ENCODE measurements at regions of chr3 and their contacts with region 1.

Region 1: DNA sequence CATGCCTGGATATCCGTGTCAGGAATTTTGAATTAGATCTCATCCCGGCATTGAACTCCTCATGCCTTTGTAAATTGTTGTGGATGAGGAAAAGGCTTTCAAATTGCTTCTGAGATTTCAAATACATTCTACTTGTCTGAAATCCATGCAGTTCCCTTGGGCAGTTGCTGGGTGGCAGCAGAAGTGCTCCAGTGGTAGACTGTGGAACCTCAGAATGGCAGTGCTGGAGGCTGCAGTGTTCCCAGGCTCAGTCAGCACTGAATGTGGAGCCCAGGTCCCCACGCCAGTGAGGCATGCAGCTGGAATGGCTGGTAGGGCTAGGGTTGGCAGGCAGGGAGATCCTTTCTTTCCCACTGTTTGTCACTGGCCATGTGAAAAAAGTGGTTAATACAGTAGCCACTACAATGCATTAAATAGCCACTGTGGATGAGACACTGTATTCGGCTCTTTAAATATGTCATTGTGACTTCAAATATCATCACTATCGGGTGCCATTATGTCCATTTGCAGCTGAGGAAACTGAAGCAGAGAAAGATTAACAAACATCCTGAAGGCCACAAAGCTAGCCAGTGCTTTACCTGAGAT is 98.6 kb downstream of the TPRG1 start:
- DNase-seq: peak; percentile 18 to 34 (median 29)
- H3K4me3 ChIP-seq: no peak overlapping the region
- H3K4me3 Mint-ChIP-seq: no peak overlapping the region
- H3K27ac ChIP-seq: no peak overlapping the region
- H3K27ac Mint-ChIP-seq: no peak overlapping the region
- H3K4me1 ChIP-seq: peaks cover 10% of the 10 kb centered on the region
- H3K4me1 Mint-ChIP-seq: peaks cover 7 to 15% (median 11%) of the 10 kb centered on the region in 4 donors
- H3K27me3 ChIP-seq: no peaks in the 10 kb centered on the region
- H3K27me3 Mint-ChIP-seq: no peaks in the 10 kb centered on the region

Region 2: GRCh38 chr3:189249987-189250386 is 20.4 kb before region 1 on chr3:
- CTCF ChIA-PET with region 1: no interaction called
- POLR2A ChIA-PET with region 1: no interaction called
- intact Hi-C with region 1: no loop called
- DNase-seq: no peak
- H3K4me3 ChIP-seq: no peak overlapping the region
- H3K4me3 Mint-ChIP-seq: no peak overlapping the region
- H3K27ac ChIP-seq: no peak overlapping the region
- H3K27ac Mint-ChIP-seq: peak overlapping the region in 1 of 7 donors; percentile 27
- H3K4me1 ChIP-seq: no peaks in the 10 kb centered on the region
- H3K4me1 Mint-ChIP-seq: no peaks in the 10 kb centered on the region
- H3K27me3 ChIP-seq: no peaks in the 10 kb centered on the region
- H3K27me3 Mint-ChIP-seq: no peaks in the 10 kb centered on the region

Region 3: GRCh38 chr3:189282741-189283140 is 12.4 kb after region 1 on chr3:
- CTCF ChIA-PET with region 1: interaction called, 11 read pairs
- POLR2A ChIA-PET with region 1: no interaction called
- intact Hi-C with region 1: no loop called
- DNase-seq: no peak
- H3K4me3 ChIP-seq: no peak overlapping the region
- H3K4me3 Mint-ChIP-seq: no peak overlapping the region
- H3K27ac ChIP-seq: no peak overlapping the region
- H3K27ac Mint-ChIP-seq: no peak overlapping the region
- H3K4me1 ChIP-seq: peaks cover 22% of the 10 kb centered on the region
- H3K4me1 Mint-ChIP-seq: peaks cover 16 to 26% (median 20%) of the 10 kb centered on the region in 4 donors
- H3K27me3 ChIP-seq: no peaks in the 10 kb centered on the region
- H3K27me3 Mint-ChIP-seq: no peaks in the 10 kb centered on the region

Region 4: GRCh38 chr3:189334064-189334920 is 64.0 kb after region 1 on chr3:
- CTCF ChIA-PET with region 1: interaction called, 15 read pairs
- POLR2A ChIA-PET with region 1: no interaction called
- intact Hi-C with region 1: no loop called
- DNase-seq: peak in 4 of 5 donors; percentile 20 to 40 (median 33)
- H3K4me3 ChIP-seq: no peak overlapping the region
- H3K4me3 Mint-ChIP-seq: peak overlapping the region in 2 of 8 donors; percentile 12 to 16
- H3K27ac ChIP-seq: no peak overlapping the region
- H3K27ac Mint-ChIP-seq: peak overlapping the region in 5 of 7 donors; percentile 5 to 85 (median 20)
- H3K4me1 ChIP-seq: peaks cover 41% of the 10 kb centered on the region
- H3K4me1 Mint-ChIP-seq: peaks cover 34 to 48% (median 41%) of the 10 kb centered on the region in 4 donors
- H3K27me3 ChIP-seq: no peaks in the 10 kb centered on the region
- H3K27me3 Mint-ChIP-seq: no peaks in the 10 kb centered on the region

Region 5: GRCh38 chr3:189394599-189395121 is 124.3 kb after region 1 on chr3:
- CTCF ChIA-PET with region 1: no interaction called
- POLR2A ChIA-PET with region 1: no interaction called
- intact Hi-C with region 1: no loop called
- DNase-seq: no peak
- H3K4me3 ChIP-seq: no peak overlapping the region
- H3K4me3 Mint-ChIP-seq: peak overlapping the region in 6 of 8 donors; percentile 2 to 55 (median 26)
- H3K27ac ChIP-seq: no peak overlapping the region
- H3K27ac Mint-ChIP-seq: peak overlapping the region in 2 of 7 donors; percentile 19 to 59
- H3K4me1 ChIP-seq: peaks cover 13% of the 10 kb centered on the region
- H3K4me1 Mint-ChIP-seq: peaks cover 13 to 20% (median 17%) of the 10 kb centered on the region in 4 donors
- H3K27me3 ChIP-seq: no peaks in the 10 kb centered on the region
- H3K27me3 Mint-ChIP-seq: peaks cover 0 to 1% of the 10 kb centered on the region in 2 donors

Region 6: DNA sequence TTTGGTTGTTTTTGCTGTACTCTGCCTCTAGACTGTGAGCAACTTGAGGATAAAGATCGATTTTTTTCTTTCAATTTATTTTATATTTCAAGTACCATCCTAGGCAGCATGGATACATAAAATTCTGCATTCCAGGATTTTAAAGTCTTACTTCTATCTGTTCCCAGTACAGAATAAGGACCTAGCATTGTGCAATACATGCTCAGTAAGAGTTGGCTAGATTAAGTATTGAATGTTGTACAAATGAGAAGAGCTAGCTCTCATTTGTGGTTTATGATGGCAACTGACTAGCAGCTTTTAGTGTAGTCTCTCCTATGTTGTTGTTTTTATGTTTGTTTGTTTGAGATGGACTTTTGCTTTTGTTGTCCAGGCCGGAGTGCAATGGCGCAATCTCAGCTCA is 583.6 kb after region 1 on chr3:
- CTCF ChIA-PET with region 1: no interaction called
- POLR2A ChIA-PET with region 1: no interaction called
- intact Hi-C with region 1: loop called (anchors 5 kb)
- DNase-seq: no peak
- H3K4me3 ChIP-seq: no peak overlapping the region
- H3K4me3 Mint-ChIP-seq: no peak overlapping the region
- H3K27ac ChIP-seq: no peak overlapping the region
- H3K27ac Mint-ChIP-seq: no peak overlapping the region
- H3K4me1 ChIP-seq: no peaks in the 10 kb centered on the region
- H3K4me1 Mint-ChIP-seq: no peaks in the 10 kb centered on the region
- H3K27me3 ChIP-seq: no peaks in the 10 kb centered on the region
- H3K27me3 Mint-ChIP-seq: peaks cover 0 to 2% of the 10 kb centered on the region in 2 donors

Region 7: GRCh38 chr3:189961525-189962161 is 691.3 kb after region 1 on chr3:
- CTCF ChIA-PET with region 1: interaction called, 23 read pairs
- POLR2A ChIA-PET with region 1: no interaction called
- intact Hi-C with region 1: no loop called
- DNase-seq: peak; percentile 40 to 53 (median 50)
- H3K4me3 ChIP-seq: no peak overlapping the region
- H3K4me3 Mint-ChIP-seq: no peak overlapping the region
- H3K27ac ChIP-seq: no peak overlapping the region
- H3K27ac Mint-ChIP-seq: no peak overlapping the region
- H3K4me1 ChIP-seq: peaks cover 6% of the 10 kb centered on the region
- H3K4me1 Mint-ChIP-seq: peaks cover 2 to 8% (median 5%) of the 10 kb centered on the region in 4 donors
- H3K27me3 ChIP-seq: no peaks in the 10 kb centered on the region
- H3K27me3 Mint-ChIP-seq: peaks cover 11 to 14% of the 10 kb centered on the region in 2 donors

Region 8: DNA sequence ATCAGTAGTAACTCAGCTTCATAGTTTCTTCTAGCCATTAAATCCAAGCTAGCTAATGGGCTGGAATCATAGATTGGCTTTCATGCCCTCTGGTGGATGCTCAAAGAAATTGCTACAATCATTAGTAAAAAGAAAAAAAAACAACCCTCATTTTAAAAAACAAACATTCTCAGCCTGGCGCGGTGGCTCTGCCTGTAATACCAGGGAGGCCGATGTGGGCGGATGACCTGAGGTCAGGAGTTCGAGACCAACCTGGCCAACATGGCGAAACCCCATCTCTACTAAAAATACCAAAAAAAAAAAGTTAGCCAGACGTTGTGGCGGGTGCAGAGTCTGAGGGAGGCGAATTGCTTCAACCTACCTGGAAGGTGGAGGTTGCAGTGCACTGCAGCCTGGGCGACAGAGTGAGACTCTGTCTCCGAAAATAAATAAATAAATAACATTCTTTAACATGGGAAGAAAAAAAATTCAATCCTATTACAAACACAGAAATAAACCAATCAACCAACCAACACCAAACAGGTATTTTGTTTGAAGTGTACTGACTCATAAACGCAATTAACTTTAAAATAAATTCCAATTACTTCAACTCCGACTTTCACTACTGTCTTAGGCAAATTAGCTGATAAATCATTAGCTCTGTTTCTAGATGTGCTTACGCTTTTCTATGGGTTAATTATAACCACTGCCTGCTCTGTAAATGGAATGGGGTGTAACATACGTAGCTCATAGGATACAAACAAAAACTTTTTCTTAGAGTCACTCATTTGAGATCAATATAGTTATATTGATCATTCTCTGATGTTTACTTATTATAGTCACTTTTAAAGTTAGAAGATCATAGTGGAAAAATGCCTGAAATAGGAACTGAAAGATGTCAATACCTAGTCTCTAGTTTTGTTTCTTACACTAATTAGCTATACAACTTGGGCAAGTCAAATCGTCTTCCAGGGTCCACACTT is 1154.4 kb after region 1 on chr3:
- CTCF ChIA-PET with region 1: no interaction called
- POLR2A ChIA-PET with region 1: no interaction called
- intact Hi-C with region 1: no loop called
- DNase-seq: peak in 4 of 5 donors; percentile 31 to 44 (median 38)
- H3K4me3 ChIP-seq: no peak overlapping the region
- H3K4me3 Mint-ChIP-seq: peak overlapping the region; percentile 52 to 75 (median 70)
- H3K27ac ChIP-seq: no peak overlapping the region
- H3K27ac Mint-ChIP-seq: peak overlapping the region; percentile 18 to 89 (median 78)
- H3K4me1 ChIP-seq: no peaks in the 10 kb centered on the region
- H3K4me1 Mint-ChIP-seq: peaks cover 6 to 8% (median 7%) of the 10 kb centered on the region in 4 donors
- H3K27me3 ChIP-seq: no peaks in the 10 kb centered on the region
- H3K27me3 Mint-ChIP-seq: no peaks in the 10 kb centered on the region